Activated CD4-positive, alpha-beta T cell treated with anti-CD3 and anti-CD28 coated beads for 36 hours (primary cell): ENCODE measurements at regions of chr12 and their contacts with region 1.

Region 1: GRCh38 chr12:6778574-6779550 is 6.5 kb downstream of the LAG3 start:
- DNase-seq: peak; percentile 95
- ATAC-seq: peak; percentile 59
- H3K4me3 Mint-ChIP-seq: peak overlapping the region; percentile 72
- H3K27ac Mint-ChIP-seq: peak overlapping the region; percentile 84
- H3K4me1 Mint-ChIP-seq: peaks cover 91% of the 10 kb centered on the region
- H3K27me3 Mint-ChIP-seq: peaks cover 5% of the 10 kb centered on the region

Region 2: DNA sequence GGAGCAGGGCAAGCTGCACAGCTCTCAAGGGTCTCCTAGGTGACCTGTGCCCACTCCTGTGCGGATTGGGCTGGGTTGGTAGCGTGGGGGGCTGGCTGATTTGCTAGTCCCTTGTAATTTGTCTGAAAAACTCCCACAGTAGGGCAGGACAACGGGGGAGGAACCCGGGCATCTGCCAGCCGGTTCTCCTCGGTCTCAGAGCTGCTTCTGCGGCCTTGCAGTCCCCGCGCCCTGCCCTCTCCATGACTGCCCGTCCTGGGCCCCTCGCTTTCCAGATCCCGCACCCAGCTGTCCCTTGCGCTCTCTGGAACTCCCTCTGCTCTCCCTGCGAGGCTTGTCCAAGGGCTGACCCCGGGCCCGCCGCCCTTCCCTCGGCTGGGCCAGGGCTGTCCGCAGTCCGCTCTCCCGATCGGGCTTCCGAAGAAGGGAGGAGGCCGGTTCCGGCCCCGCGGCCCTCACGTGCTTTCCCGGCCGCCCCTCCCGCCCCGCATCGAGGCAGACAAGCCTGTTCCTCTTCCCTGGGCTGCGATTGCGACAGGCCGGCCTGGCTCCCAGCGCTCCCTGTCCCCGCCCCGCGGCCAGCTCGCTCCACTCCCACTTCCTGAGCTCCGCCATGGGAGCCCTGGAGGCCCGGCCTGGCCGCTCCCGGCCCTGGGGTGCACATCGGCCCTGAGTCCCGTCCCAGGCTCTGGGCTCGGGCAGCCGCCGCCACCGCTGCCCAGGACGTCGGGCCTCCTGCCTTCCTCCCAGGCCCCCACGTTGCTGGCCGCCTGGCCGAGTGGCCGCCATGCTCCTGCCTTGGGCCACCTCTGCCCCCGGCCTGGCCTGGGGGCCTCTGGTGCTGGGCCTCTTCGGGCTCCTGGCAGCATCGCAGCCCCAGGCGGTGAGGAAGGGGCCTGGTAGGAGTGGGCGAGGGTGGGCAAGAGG is 395.0 kb before region 1 on chr12 and contains the start of gene LTBR:
- CTCF ChIA-PET with region 1: no interaction called
- POLR2A ChIA-PET with region 1: no interaction called
- intact Hi-C with region 1: no loop called
- DNase-seq: no peak
- ATAC-seq: peak; percentile 44
- H3K4me3 Mint-ChIP-seq: no peak within 1 kb of the TSS
- H3K27ac Mint-ChIP-seq: no peak within 1 kb of the TSS
- H3K4me1 Mint-ChIP-seq: peaks cover 2% of the 10 kb centered on the region
- H3K27me3 Mint-ChIP-seq: peaks cover 15% of the 10 kb centered on the region
- total RNA-seq, gene LTBR: 0.57 to 1.1 TPM

Region 3: DNA sequence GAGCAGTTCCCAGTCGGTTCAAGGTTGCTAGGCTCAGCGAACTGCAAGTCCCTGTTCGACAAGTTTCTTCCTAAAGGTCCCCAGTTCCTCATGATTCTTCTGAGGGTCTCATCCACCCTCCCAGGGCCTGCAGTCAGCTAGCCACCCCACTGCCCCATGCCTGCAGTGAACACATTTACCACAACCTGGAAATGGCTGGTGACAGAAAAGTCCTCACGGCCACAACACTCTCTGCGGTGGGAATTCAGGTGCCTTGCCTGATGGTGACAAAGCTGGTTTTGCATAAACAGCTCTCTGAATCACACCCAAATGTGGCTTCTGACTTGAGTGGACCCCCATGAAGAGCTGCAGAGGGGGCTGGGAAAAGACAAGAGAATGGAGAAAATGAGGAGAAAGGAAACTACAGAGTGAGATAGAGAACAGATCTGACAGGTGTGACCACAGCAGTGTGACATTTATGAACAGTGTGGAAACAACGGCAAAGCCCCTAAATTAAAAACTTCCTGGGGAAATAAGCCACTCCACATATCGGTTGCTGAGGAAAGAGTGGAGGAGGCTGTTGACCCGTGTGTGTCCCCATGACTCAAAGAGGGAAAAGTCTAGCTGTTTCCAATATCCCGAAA is 335.4 kb before region 1 on chr12:
- CTCF ChIA-PET with region 1: no interaction called
- POLR2A ChIA-PET with region 1: no interaction called
- intact Hi-C with region 1: loop called in 1 of 2 experiments (anchors 5 kb)
- DNase-seq: peak; percentile 76
- ATAC-seq: peak; percentile 65
- H3K4me3 Mint-ChIP-seq: peak overlapping the region; percentile 86
- H3K27ac Mint-ChIP-seq: peak overlapping the region; percentile 94
- H3K4me1 Mint-ChIP-seq: peaks cover 71% of the 10 kb centered on the region
- H3K27me3 Mint-ChIP-seq: no peaks in the 10 kb centered on the region

Region 4: GRCh38 chr12:6476489-6476888 is 302.4 kb before region 1 on chr12:
- CTCF ChIA-PET with region 1: no interaction called
- POLR2A ChIA-PET with region 1: no interaction called
- intact Hi-C with region 1: no loop called
- DNase-seq: no peak
- ATAC-seq: no peak
- H3K4me3 Mint-ChIP-seq: no peak overlapping the region
- H3K27ac Mint-ChIP-seq: no peak overlapping the region
- H3K4me1 Mint-ChIP-seq: peaks cover 8% of the 10 kb centered on the region
- H3K27me3 Mint-ChIP-seq: no peaks in the 10 kb centered on the region

Region 5: DNA sequence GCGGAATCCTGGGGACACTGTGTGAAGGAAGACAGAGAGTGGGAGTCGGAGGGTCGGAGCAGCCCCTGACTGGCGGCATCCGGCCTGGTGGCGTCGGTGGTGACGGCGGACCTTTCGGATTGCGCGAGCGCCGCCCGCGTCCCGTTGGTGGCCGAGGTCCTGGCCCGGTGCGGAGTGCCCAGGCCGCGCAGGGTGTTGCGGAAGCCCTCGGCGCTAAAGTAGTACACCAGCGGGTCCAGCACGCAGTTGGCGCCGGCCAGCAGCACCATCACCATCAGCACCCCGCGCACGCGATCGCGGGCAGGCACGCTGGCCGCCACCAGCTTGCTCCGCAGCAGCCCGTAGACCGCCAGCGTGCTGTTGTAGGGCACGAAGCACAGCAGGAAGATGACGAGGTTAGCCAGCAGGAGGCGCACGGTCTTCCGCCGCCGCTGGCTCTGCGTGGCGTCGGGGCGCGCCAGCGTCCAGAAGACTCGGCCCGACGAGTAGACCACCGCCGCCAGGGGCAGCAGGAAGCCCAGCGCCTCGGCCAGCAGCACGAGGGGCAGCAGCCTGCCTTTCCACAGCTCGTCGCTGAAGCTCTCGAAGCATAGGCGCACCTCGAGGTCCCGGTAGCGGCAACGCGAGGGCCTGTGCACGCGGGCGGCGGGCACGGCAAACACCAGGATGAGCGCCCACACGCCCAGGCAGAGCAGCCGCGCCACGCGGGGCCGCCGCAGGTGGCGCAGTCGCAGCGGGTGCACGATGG is 158.6 kb before region 1 on chr12:
- CTCF ChIA-PET with region 1: interaction called, 4 read pairs
- POLR2A ChIA-PET with region 1: interaction called, 5 read pairs
- intact Hi-C with region 1: loop called (anchors 1 to 5 kb)
- DNase-seq: peak; percentile 82
- ATAC-seq: peak; percentile 82
- H3K4me3 Mint-ChIP-seq: peak overlapping the region; percentile 67
- H3K27ac Mint-ChIP-seq: peak overlapping the region; percentile 73
- H3K4me1 Mint-ChIP-seq: peaks cover 8% of the 10 kb centered on the region
- H3K27me3 Mint-ChIP-seq: no peaks in the 10 kb centered on the region

Region 6: DNA sequence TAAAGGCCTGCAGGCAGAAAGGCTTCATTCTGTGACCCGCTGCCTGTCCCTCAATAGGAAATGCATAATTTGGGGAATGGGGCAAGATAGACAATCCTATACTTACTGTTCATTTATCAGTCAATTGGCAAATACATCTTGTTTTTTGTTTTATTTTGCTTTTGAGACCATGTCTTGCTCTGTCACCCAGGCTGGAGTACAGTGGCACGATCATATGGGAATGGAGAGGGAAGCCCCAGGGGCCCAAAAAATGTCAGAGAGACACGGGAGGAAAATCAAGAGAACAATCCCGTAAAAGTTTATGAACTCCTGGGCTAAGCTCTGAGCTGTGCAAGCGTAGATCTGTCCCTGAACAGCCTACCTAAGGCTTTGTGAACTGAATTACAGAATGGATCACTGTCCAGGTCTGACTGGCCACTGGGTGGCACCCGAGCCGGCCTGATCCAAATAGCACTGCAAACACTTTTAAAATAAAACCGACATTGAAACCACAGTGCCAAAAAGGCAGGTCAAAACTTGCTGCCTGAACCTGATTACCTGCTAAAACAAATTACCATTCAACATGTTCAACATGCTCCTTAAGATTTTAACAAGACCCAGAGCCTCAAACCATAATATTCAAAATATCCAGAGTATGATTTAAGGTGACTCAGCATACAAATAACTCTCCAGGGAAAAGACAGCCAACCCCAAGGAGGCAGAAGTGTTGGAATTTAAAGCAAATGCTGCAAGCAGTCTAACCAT is 43.2 kb before region 1 on chr12:
- CTCF ChIA-PET with region 1: no interaction called
- POLR2A ChIA-PET with region 1: no interaction called
- intact Hi-C with region 1: loop called in 1 of 2 experiments (anchors 1 kb)
- DNase-seq: peak; percentile 72
- ATAC-seq: peak; percentile 81
- H3K4me3 Mint-ChIP-seq: no peak overlapping the region
- H3K27ac Mint-ChIP-seq: no peak overlapping the region
- H3K4me1 Mint-ChIP-seq: peaks cover 6% of the 10 kb centered on the region
- H3K27me3 Mint-ChIP-seq: no peaks in the 10 kb centered on the region

Region 7: GRCh38 chr12:6792522-6793201 is 13.8 kb after region 1 on chr12:
- CTCF ChIA-PET with region 1: interaction called, 37 read pairs
- POLR2A ChIA-PET with region 1: interaction called, 14 read pairs
- intact Hi-C with region 1: loop called in 1 of 2 experiments (anchors 1 kb)
- DNase-seq: peak; percentile 52
- ATAC-seq: peak; percentile 20
- H3K4me3 Mint-ChIP-seq: peak overlapping the region; percentile 89
- H3K27ac Mint-ChIP-seq: peak overlapping the region; percentile 93
- H3K4me1 Mint-ChIP-seq: peaks cover 56% of the 10 kb centered on the region
- H3K27me3 Mint-ChIP-seq: no peaks in the 10 kb centered on the region